CD4-positive, alpha-beta memory T cell (primary cell): ENCODE measurements at regions of chr3 and their contacts with region 1.

Region 1: GRCh38 chr3:42556089-42556632 is 25.6 kb downstream of the SEC22C start:
- DNase-seq: peak; percentile 78 to 86 (median 81)
- H3K4me3 ChIP-seq: peak overlapping the region; percentile 15 to 17
- H3K4me3 Mint-ChIP-seq: peak overlapping the region; percentile 46 to 88 (median 80)
- H3K27ac ChIP-seq: peak overlapping the region; percentile 41
- H3K27ac Mint-ChIP-seq: peak overlapping the region; percentile 91 to 99 (median 98)
- H3K4me1 ChIP-seq: peaks cover 44% of the 10 kb centered on the region
- H3K4me1 Mint-ChIP-seq: peaks cover 31 to 52% (median 43%) of the 10 kb centered on the region in 4 donors
- H3K27me3 ChIP-seq: no peaks in the 10 kb centered on the region
- H3K27me3 Mint-ChIP-seq: no peaks in the 10 kb centered on the region

Region 2: GRCh38 chr3:41893977-41894376 is 662.2 kb before region 1 on chr3:
- CTCF ChIA-PET with region 1: no interaction called
- POLR2A ChIA-PET with region 1: no interaction called
- intact Hi-C with region 1: loop called (anchors 10 kb)
- DNase-seq: peak in 4 of 5 donors; percentile 20 to 34 (median 26)
- H3K4me3 ChIP-seq: no peak overlapping the region
- H3K4me3 Mint-ChIP-seq: no peak overlapping the region
- H3K27ac ChIP-seq: no peak overlapping the region
- H3K27ac Mint-ChIP-seq: no peak overlapping the region
- H3K4me1 ChIP-seq: no peaks in the 10 kb centered on the region
- H3K4me1 Mint-ChIP-seq: no peaks in the 10 kb centered on the region
- H3K27me3 ChIP-seq: no peaks in the 10 kb centered on the region
- H3K27me3 Mint-ChIP-seq: no peaks in the 10 kb centered on the region

Region 3: DNA sequence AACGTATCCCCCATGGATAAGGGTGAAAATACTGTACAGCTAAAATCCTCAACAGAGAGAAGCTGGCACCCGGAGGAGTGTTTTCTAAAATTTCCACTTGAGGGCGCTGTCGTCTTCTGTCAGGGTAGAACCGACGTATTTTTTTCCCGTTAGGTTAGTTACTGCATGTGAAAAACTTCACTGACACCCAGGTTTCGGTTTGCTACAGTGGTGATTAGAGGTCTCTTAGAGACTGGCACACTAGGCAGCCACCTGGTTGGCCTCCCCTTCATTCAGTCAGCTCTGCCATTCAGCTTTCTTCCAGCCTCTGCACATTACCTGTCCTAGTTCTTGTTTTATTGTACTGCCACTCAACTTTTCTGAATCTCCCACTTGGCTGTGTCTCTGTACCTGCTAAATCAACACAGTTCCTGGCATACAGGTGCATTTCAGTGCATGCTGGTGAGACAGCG is 308.6 kb before region 1 on chr3:
- CTCF ChIA-PET with region 1: interaction called, 12 read pairs
- POLR2A ChIA-PET with region 1: no interaction called
- intact Hi-C with region 1: loop called (anchors 1 kb)
- DNase-seq: peak; percentile 55 to 64 (median 59)
- H3K4me3 ChIP-seq: no peak overlapping the region
- H3K4me3 Mint-ChIP-seq: peak overlapping the region in 3 of 8 donors; percentile 20 to 56 (median 45)
- H3K27ac ChIP-seq: no peak overlapping the region
- H3K27ac Mint-ChIP-seq: peak overlapping the region in 2 of 7 donors; percentile 14 to 26
- H3K4me1 ChIP-seq: peaks cover 3% of the 10 kb centered on the region
- H3K4me1 Mint-ChIP-seq: peaks cover 4 to 9% (median 7%) of the 10 kb centered on the region in 4 donors
- H3K27me3 ChIP-seq: no peaks in the 10 kb centered on the region
- H3K27me3 Mint-ChIP-seq: peaks cover 6 to 15% of the 10 kb centered on the region in 2 donors

Region 4: GRCh38 chr3:42518800-42519567 is 37.2 kb before region 1 on chr3:
- CTCF ChIA-PET with region 1: interaction called, 1,823 read pairs
- POLR2A ChIA-PET with region 1: interaction called, 3 read pairs
- intact Hi-C with region 1: loop called (anchors 1 kb)
- DNase-seq: peak in 4 of 5 donors; percentile 52 to 60 (median 58)
- H3K4me3 ChIP-seq: no peak overlapping the region
- H3K4me3 Mint-ChIP-seq: peak overlapping the region in 7 of 8 donors; percentile 68 to 88 (median 79)
- H3K27ac ChIP-seq: peak overlapping the region; percentile 36
- H3K27ac Mint-ChIP-seq: peak overlapping the region; percentile 76 to 94 (median 93)
- H3K4me1 ChIP-seq: peaks cover 33% of the 10 kb centered on the region
- H3K4me1 Mint-ChIP-seq: peaks cover 24 to 61% (median 44%) of the 10 kb centered on the region in 4 donors
- H3K27me3 ChIP-seq: no peaks in the 10 kb centered on the region
- H3K27me3 Mint-ChIP-seq: no peaks in the 10 kb centered on the region

Region 5: GRCh38 chr3:42581709-42582473 is 25.7 kb after region 1 on chr3 and contains the start of gene SEC22C:
- CTCF ChIA-PET with region 1: interaction called, 4 read pairs
- POLR2A ChIA-PET with region 1: interaction called, 14 read pairs
- intact Hi-C with region 1: loop called (anchors 2 kb)
- DNase-seq: peak; percentile 94 to 97 (median 95)
- H3K4me3 ChIP-seq: peak within 1 kb of the TSS; percentile 59 to 78
- H3K4me3 Mint-ChIP-seq: peak within 1 kb of the TSS; percentile 86 to 96 (median 94)
- H3K27ac ChIP-seq: peak within 1 kb of the TSS; percentile 96
- H3K27ac Mint-ChIP-seq: peak within 1 kb of the TSS; percentile 97 to 100 (median 99)
- H3K4me1 ChIP-seq: peaks cover 39% of the 10 kb centered on the region
- H3K4me1 Mint-ChIP-seq: peaks cover 38 to 59% (median 47%) of the 10 kb centered on the region in 4 donors
- H3K27me3 ChIP-seq: no peaks in the 10 kb centered on the region
- H3K27me3 Mint-ChIP-seq: no peaks in the 10 kb centered on the region
- total RNA-seq, gene SEC22C: 55.8 to 56.6 TPM